Caco-2 (cell line): ENCODE measurements at regions of chr9 and their contacts with region 1.

Region 1: DNA sequence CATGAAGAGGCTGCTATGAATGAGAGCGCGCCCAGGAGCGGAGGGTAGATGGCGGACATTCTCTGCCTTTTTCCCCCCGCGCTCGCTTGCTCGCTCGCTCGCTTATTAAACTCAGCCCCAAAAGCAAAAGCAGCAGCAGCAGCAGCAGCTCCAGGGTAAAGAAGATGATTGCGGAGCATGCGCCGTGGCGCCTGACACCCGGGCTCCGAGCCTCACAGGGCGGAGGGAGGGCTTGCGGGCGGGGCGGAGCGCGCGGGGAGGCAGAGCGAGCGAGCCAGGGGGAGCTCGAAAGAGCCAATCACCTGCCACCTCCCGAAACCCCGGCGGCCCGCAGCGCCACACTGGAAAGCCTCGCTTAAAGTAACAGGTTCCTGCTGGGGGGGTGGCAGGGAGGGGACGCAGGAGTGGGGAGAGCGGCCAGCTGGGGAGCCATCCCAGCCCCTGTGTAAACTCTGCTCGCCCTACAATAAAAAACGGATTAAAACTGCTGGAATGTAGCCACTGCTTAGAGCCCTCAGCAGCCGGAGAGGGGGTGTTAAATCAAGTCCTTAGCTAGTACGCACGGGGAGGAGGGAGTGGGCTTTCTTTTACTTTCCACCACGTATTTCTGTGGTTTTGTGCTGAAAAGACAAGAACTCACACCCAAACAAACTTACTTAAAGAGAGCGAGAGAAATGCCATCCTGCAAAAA is at the start of gene MLLT3:
- DNase-seq: peak; percentile 94
- H3K4me3 ChIP-seq: peak within 1 kb of the TSS; percentile 62
- H3K4me3 Mint-ChIP-seq: peak within 1 kb of the TSS; percentile 69
- H3K27ac Mint-ChIP-seq: peak within 1 kb of the TSS; percentile 76
- H3K4me1 ChIP-seq: peaks cover 9% of the 10 kb centered on the region; the same call in 1 of the 2 replicates
- H3K4me1 Mint-ChIP-seq: peaks cover 6% of the 10 kb centered on the region
- H3K27me3 ChIP-seq: no peaks in the 10 kb centered on the region
- H3K27me3 Mint-ChIP-seq: no peaks in the 10 kb centered on the region
- CTCF ChIP-seq: peak in 1 of 2 experiments; percentile 15
- total RNA-seq, gene MLLT3: 22.0 and 24.4 TPM in 2 replicates

Region 2: GRCh38 chr9:19925817-19926503 is 696.5 kb before region 1 on chr9:
- CTCF ChIA-PET with region 1: no interaction called
- POLR2A ChIA-PET with region 1: no interaction called
- intact Hi-C with region 1: loop called (anchors 1 kb)
- DNase-seq: peak; percentile 61 to 79
- H3K4me3 ChIP-seq: peak overlapping the region; percentile 21
- H3K4me3 Mint-ChIP-seq: peak overlapping the region; percentile 83
- H3K27ac Mint-ChIP-seq: peak overlapping the region; percentile 53
- H3K4me1 ChIP-seq: no peaks in the 10 kb centered on the region
- H3K4me1 Mint-ChIP-seq: peaks cover 8% of the 10 kb centered on the region
- H3K27me3 ChIP-seq: no peaks in the 10 kb centered on the region
- H3K27me3 Mint-ChIP-seq: peaks cover 2% of the 10 kb centered on the region
- CTCF ChIP-seq: peak; percentile 79 to 85

Region 3: DNA sequence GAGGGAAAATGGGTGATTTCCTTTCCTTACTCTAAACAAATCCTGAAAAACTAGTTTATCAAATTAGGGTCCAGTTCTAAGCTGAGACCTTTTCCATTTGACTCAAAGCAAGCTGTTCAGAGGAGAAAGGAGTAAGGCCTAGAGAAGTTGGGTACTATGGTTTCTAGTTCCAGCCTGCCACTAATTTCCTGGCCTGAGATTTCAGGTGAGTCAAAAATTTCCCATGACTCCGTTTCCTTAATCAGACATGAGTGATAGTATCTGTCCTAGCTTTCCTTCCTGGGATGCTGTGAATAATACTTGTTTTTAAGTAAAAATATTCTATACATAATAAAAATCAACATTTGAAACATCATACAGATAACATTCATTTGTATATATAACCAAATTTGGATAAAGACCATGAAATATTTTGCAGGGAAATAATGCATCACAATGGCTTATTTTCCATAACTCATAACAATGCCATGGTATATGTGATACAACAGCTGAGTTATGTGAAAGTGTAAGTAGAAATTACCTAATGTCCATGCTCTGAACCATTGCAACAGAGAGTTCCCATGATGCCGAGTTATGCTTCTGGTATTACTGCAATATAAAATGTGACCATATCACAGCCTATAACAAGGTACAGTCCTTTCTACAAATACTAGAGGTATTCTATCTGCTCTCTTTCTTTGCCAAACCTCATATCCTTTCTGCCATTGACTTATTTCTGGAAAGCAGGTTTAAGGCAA is 142.9 kb before region 1 on chr9:
- CTCF ChIA-PET with region 1: no interaction called
- POLR2A ChIA-PET with region 1: no interaction called
- intact Hi-C with region 1: loop called (anchors 2 kb)
- DNase-seq: no peak
- H3K4me3 ChIP-seq: no peak overlapping the region
- H3K4me3 Mint-ChIP-seq: no peak overlapping the region
- H3K27ac Mint-ChIP-seq: no peak overlapping the region
- H3K4me1 ChIP-seq: peaks cover 36% of the 10 kb centered on the region
- H3K4me1 Mint-ChIP-seq: no peaks in the 10 kb centered on the region
- H3K27me3 ChIP-seq: no peaks in the 10 kb centered on the region
- H3K27me3 Mint-ChIP-seq: no peaks in the 10 kb centered on the region
- CTCF ChIP-seq: no peak

Region 4: DNA sequence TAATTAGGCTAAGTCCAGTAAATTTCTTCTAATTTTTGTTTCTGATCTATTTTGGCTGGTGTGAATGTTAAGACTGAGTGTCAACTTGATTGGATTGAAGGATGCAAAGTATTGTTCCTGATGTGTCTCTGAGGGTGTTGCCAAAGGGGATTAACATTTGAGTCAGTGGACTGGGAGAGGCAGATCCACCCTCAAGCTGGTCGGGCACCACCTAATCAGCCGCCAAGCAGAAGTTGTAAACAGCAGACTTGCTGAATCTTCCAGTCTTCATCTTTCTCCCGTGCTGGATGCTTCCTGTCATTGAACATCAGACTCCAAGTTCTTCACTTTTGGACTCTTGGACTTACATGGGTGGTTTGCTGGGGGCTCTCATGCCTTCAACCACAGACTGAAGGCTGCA is 21.2 kb after region 1 on chr9:
- CTCF ChIA-PET with region 1: no interaction called
- POLR2A ChIA-PET with region 1: no interaction called
- intact Hi-C with region 1: no loop called
- DNase-seq: no peak
- H3K4me3 ChIP-seq: no peak overlapping the region
- H3K4me3 Mint-ChIP-seq: no peak overlapping the region
- H3K27ac Mint-ChIP-seq: no peak overlapping the region
- H3K4me1 ChIP-seq: no peaks in the 10 kb centered on the region
- H3K4me1 Mint-ChIP-seq: peaks cover 7% of the 10 kb centered on the region
- H3K27me3 ChIP-seq: no peaks in the 10 kb centered on the region
- H3K27me3 Mint-ChIP-seq: no peaks in the 10 kb centered on the region
- CTCF ChIP-seq: no peak

Region 5: GRCh38 chr9:20684035-20684872 is 61.8 kb after region 1 on chr9 and contains the start of gene FOCAD:
- CTCF ChIA-PET with region 1: interaction called, 8 read pairs
- POLR2A ChIA-PET with region 1: interaction called, 8 read pairs
- intact Hi-C with region 1: loop called (anchors 1 kb)
- DNase-seq: peak; percentile 93 to 96
- H3K4me3 ChIP-seq: peak within 1 kb of the TSS; percentile 66
- H3K4me3 Mint-ChIP-seq: peak within 1 kb of the TSS; percentile 74
- H3K27ac Mint-ChIP-seq: peak within 1 kb of the TSS; percentile 79
- H3K4me1 ChIP-seq: peaks cover 16% of the 10 kb centered on the region
- H3K4me1 Mint-ChIP-seq: peaks cover 7% of the 10 kb centered on the region
- H3K27me3 ChIP-seq: no peaks in the 10 kb centered on the region
- H3K27me3 Mint-ChIP-seq: no peaks in the 10 kb centered on the region
- CTCF ChIP-seq: no peak
- total RNA-seq, gene FOCAD: 20.4 TPM in 2 replicates

Region 6: DNA sequence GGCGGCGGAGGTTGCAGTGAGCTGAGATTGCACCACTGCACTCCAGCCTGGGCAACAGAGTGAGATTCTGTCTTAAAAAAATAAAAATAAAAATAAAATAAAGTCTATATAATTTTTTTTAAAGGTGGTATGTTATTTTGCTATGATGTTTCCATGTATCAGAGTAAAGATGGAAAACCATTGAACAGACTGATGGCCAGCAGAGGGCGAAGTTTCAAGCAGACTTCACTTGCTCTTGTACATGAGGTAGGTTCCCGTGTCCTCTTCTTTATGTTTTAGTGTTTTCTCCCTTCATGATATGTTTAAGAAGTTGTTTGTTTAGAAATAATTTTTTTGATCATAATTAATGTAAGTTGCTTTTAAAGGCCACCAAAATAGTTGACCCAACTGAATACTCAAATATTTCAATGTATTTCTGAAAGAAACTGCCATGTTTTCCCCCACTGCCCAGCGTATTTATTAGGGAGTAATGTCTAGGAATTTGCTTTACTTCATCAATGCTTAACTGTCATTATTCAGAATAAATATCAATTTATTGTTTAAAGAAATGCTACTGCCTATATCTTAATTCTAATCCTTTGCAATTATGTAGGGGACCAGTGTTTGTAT is 262.6 kb after region 1 on chr9:
- CTCF ChIA-PET with region 1: interaction called, 4 read pairs
- POLR2A ChIA-PET with region 1: no interaction called
- intact Hi-C with region 1: loop called (anchors 5 kb)
- DNase-seq: peak; percentile 48 to 49
- H3K4me3 ChIP-seq: no peak overlapping the region
- H3K4me3 Mint-ChIP-seq: no peak overlapping the region
- H3K27ac Mint-ChIP-seq: no peak overlapping the region
- H3K4me1 ChIP-seq: no peaks in the 10 kb centered on the region
- H3K4me1 Mint-ChIP-seq: no peaks in the 10 kb centered on the region
- H3K27me3 ChIP-seq: no peaks in the 10 kb centered on the region
- H3K27me3 Mint-ChIP-seq: no peaks in the 10 kb centered on the region
- CTCF ChIP-seq: peak; percentile 31 to 68

Region 7: DNA sequence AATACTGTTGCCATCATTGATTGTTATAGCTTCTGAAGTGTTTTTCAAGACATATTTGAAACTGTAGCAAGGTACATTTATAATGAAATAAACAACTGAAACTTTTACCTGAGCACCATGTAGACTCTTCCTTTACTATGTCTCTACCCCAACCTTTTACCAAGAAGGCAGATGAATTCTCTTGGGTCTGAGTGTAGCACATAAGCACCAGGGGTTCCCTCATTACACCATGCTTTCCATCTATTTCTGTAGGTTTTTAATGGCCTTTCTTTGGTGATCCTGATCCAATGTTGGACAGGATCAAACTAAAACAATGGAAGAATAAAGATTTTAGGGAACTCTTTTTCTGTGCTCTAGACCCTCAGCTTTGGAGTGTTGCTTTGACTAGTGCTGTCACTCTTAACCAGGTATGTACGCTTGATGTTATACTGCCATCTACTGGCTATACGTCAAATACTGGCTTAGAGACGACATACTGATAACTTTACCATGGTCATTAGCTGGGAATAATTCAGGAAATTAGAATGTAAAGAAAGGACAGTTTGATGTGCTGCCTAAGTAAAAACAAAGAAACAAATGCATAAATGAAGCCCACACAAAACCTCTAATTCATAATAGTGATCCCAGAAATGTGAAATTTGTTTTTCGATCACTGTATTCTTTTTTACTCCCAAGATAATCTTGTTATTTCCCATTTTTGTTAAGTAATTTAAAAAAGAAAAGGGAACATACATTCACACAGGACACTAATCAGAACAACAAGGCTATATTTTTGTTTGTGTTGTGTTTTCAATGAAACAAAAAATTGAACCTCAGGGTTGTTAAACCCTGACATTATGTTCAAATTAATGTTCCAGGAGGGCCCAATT is 488.5 kb after region 1 on chr9:
- CTCF ChIA-PET with region 1: interaction called, 4 read pairs
- POLR2A ChIA-PET with region 1: no interaction called
- intact Hi-C with region 1: loop called (anchors 1 kb)
- DNase-seq: peak; percentile 35 to 56
- H3K4me3 ChIP-seq: no peak overlapping the region
- H3K4me3 Mint-ChIP-seq: no peak overlapping the region
- H3K27ac Mint-ChIP-seq: no peak overlapping the region
- H3K4me1 ChIP-seq: peaks cover 13% of the 10 kb centered on the region; the same call in 1 of the 2 replicates
- H3K4me1 Mint-ChIP-seq: peaks cover 7% of the 10 kb centered on the region
- H3K27me3 ChIP-seq: no peaks in the 10 kb centered on the region
- H3K27me3 Mint-ChIP-seq: no peaks in the 10 kb centered on the region
- CTCF ChIP-seq: peak; percentile 49 to 65